Activated CD4-positive, alpha-beta T cell treated with anti-CD3 and anti-CD28 coated beads for 36 hours (primary cell): ENCODE measurements at regions of chr20 and their contacts with region 1.

Region 1: GRCh38 chr20:21235484-21236445 is 67.4 kb upstream of the XRN2 start:
- DNase-seq: peak; percentile 83
- ATAC-seq: peak; percentile 85
- H3K4me3 Mint-ChIP-seq: no peak overlapping the region
- H3K27ac Mint-ChIP-seq: no peak overlapping the region
- H3K4me1 Mint-ChIP-seq: peaks cover 3% of the 10 kb centered on the region
- H3K27me3 Mint-ChIP-seq: no peaks in the 10 kb centered on the region

Region 2: DNA sequence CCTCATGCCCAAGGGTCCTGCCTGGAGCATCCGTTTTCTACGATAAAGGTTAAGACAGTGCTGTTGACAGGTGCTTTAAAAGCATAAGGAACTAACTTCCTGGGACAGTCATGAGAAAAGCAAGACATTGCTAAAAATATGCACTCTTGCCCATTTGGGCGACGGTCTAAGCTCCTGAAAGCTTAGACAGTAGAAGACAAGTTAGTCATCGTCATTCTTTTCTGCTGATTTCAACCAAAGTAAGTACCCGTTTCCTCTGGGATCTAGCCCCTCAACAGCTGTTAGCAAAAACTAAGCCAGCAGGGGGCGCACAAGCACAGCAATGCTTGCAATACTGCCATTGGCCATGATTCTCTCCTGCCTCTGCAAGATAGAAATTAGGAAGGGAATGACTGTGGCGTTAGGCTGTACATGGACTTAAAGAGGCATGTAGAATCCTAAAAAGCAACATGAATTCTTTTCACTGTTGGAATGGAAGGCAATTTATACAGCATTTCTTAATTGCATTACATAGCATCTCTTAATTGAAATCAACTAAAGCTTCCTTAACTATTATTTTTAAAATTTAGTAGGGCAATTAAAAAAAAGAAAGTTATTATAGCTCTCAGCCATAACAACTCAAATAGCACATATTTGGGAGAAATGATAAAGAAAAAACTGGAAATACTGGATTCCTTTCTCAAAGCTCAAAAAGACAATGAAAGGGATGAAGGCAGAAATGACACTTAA is 375.5 kb before region 1 on chr20:
- CTCF ChIA-PET with region 1: interaction called, 9 read pairs
- POLR2A ChIA-PET with region 1: no interaction called
- intact Hi-C with region 1: loop called in 1 of 2 experiments (anchors 5 kb)
- DNase-seq: peak; percentile 94
- ATAC-seq: peak; percentile 93
- H3K4me3 Mint-ChIP-seq: no peak overlapping the region
- H3K27ac Mint-ChIP-seq: no peak overlapping the region
- H3K4me1 Mint-ChIP-seq: no peaks in the 10 kb centered on the region
- H3K27me3 Mint-ChIP-seq: peaks cover 19% of the 10 kb centered on the region

Region 3: GRCh38 chr20:21189761-21190523 is 45.8 kb before region 1 on chr20:
- CTCF ChIA-PET with region 1: no interaction called
- POLR2A ChIA-PET with region 1: no interaction called
- intact Hi-C with region 1: no loop called
- DNase-seq: no peak
- ATAC-seq: no peak
- H3K4me3 Mint-ChIP-seq: no peak overlapping the region
- H3K27ac Mint-ChIP-seq: no peak overlapping the region
- H3K4me1 Mint-ChIP-seq: no peaks in the 10 kb centered on the region
- H3K27me3 Mint-ChIP-seq: no peaks in the 10 kb centered on the region

Region 4: DNA sequence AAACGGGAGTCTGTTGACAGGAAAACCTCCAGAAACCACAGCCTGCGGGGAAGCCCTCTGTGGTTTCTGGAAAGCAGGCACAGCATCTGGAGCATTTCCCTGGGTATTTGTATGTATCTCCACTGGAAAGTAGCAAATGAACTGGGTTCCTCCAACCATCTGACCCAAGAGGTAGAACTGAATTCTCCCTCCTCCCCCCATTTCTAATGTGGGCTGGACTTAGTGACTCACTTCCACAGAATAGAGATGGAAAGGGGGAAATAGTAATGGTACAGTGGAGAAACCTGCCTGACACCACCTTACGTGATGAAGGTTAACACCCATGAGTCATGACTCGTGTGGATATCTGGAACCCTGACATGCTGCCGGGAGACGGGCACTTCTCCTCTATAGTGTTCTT is 15.5 kb after region 1 on chr20:
- CTCF ChIA-PET with region 1: interaction called, 15 read pairs
- POLR2A ChIA-PET with region 1: no interaction called
- intact Hi-C with region 1: no loop called
- DNase-seq: peak; percentile 40
- ATAC-seq: peak; percentile 94
- H3K4me3 Mint-ChIP-seq: no peak overlapping the region
- H3K27ac Mint-ChIP-seq: peak overlapping the region; percentile 78
- H3K4me1 Mint-ChIP-seq: peaks cover 16% of the 10 kb centered on the region
- H3K27me3 Mint-ChIP-seq: peaks cover 2% of the 10 kb centered on the region

Region 5: DNA sequence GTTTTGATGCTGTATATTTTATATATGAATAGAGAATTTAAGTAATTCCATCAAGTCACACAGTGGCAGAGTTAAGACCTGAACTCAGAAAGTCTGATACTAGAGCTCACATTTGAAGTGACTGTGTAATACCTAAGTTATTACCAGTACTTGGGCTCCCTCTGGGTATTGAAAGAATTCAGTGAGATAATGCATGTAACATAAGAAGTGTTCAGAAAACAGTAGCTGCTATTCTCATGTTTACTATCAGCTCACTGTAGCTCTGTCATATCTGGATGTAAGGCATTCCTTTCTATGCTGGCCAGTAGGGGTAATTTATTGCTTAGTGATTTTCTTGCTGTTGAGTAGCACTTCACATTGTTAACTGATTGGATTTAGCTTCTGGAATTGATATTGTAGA is 116.9 kb after region 1 on chr20:
- CTCF ChIA-PET with region 1: interaction called, 12 read pairs
- POLR2A ChIA-PET with region 1: no interaction called
- intact Hi-C with region 1: loop called in 1 of 2 experiments (anchors 5 kb)
- DNase-seq: no peak
- ATAC-seq: no peak
- H3K4me3 Mint-ChIP-seq: no peak overlapping the region
- H3K27ac Mint-ChIP-seq: no peak overlapping the region
- H3K4me1 Mint-ChIP-seq: no peaks in the 10 kb centered on the region
- H3K27me3 Mint-ChIP-seq: no peaks in the 10 kb centered on the region

Region 6: DNA sequence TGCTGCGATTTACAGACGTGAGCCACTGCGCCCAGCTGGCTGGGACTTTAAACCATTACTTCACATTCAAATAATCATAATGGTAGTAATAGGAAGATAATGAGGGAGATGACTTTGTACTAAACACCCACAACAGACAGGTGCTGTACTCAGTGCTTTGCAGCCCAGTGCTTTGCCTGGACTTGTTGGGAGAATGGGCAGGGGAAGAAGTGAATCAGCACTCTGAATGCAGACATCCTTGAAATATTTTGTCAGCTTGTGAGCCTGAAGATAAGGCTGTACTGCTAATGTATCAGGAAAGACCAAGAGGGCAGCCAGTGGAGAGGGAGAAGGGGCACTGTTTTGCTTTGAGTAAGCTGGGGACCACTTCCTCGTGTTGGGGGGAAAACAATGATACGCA is 260.7 kb after region 1 on chr20:
- CTCF ChIA-PET with region 1: interaction called, 179 read pairs
- POLR2A ChIA-PET with region 1: no interaction called
- intact Hi-C with region 1: no loop called
- DNase-seq: no peak
- ATAC-seq: no peak
- H3K4me3 Mint-ChIP-seq: no peak overlapping the region
- H3K27ac Mint-ChIP-seq: no peak overlapping the region
- H3K4me1 Mint-ChIP-seq: no peaks in the 10 kb centered on the region
- H3K27me3 Mint-ChIP-seq: peaks cover 25% of the 10 kb centered on the region

Region 7: GRCh38 chr20:21571841-21572690 is 336.3 kb after region 1 on chr20:
- CTCF ChIA-PET with region 1: interaction called, 8 read pairs
- POLR2A ChIA-PET with region 1: no interaction called
- intact Hi-C with region 1: loop called (anchors 1 to 5 kb)
- DNase-seq: peak; percentile 25
- ATAC-seq: no peak
- H3K4me3 Mint-ChIP-seq: no peak overlapping the region
- H3K27ac Mint-ChIP-seq: no peak overlapping the region
- H3K4me1 Mint-ChIP-seq: peaks cover 6% of the 10 kb centered on the region
- H3K27me3 Mint-ChIP-seq: peaks cover 12% of the 10 kb centered on the region

Region 8: DNA sequence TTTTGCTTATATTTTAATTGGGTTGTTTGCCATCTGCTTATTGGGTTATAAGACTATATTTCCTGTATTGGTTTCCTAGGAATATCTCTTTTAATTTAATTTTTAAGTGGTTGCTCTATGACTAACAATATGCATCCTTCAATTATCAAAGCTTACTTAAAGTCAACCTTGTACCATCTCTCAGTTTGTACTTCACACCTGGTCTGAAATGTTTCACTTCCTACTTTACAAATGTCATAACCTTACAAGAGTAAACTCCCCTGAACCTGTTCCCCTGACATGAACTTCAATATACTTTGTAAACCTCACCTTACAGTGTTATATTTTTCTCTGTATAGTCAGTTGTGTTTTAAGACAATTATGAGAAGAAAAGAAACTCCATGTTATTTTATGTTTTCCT is 505.5 kb after region 1 on chr20:
- CTCF ChIA-PET with region 1: no interaction called
- POLR2A ChIA-PET with region 1: no interaction called
- intact Hi-C with region 1: no loop called
- DNase-seq: no peak
- ATAC-seq: no peak
- H3K4me3 Mint-ChIP-seq: no peak overlapping the region
- H3K27ac Mint-ChIP-seq: no peak overlapping the region
- H3K4me1 Mint-ChIP-seq: no peaks in the 10 kb centered on the region
- H3K27me3 Mint-ChIP-seq: no peaks in the 10 kb centered on the region